Activated CD8-positive, alpha-beta T cell treated with anti-CD3 and anti-CD28 coated beads, Interleukin-2, amount 10 ng/mL, durations not matched to agents 7 days and 5 days (primary cell): ENCODE measurements at regions of chr14 and their contacts with region 1.

Region 1: GRCh38 chr14:92563359-92563758 is 49.8 kb downstream of the RIN3 start:
- DNase-seq: peak; percentile 61
- ATAC-seq: peak; percentile 81
- H3K4me3 Mint-ChIP-seq: no peak overlapping the region
- H3K27ac Mint-ChIP-seq: peak overlapping the region; percentile 69
- H3K4me1 Mint-ChIP-seq: peaks cover 78% of the 10 kb centered on the region
- H3K27me3 Mint-ChIP-seq: no peaks in the 10 kb centered on the region

Region 2: DNA sequence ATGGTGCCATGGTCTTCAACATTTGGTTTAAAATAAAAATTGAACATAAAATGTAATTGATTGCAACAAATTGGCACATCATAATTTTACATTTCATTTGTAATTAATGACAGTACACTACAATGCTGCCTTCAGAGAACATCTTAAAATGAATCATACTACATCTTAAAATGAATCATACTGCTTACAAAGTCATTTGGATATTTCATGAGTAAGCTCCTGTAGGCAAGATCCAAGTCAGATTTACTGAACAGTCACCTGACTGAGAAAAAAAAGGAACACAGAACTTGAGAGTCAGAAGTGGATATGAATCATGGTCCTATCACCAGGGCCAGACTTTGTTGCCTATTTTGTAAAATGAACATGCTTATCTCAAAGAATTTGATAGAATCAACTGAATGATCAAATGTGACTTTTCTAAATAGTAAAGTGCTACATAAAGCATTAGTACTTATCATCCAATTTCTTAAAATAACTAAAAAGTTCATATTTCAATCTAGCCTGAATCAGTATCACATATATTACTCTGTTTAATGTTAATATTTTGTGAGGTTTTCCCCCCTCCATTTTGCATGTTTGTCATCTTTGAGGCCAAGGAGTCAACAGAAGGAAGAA is 583.1 kb before region 1 on chr14:
- CTCF ChIA-PET with region 1: no interaction called
- POLR2A ChIA-PET with region 1: no interaction called
- DNase-seq: no peak
- ATAC-seq: peak; percentile 49
- H3K4me3 Mint-ChIP-seq: no peak overlapping the region
- H3K27ac Mint-ChIP-seq: no peak overlapping the region
- H3K4me1 Mint-ChIP-seq: no peaks in the 10 kb centered on the region
- H3K27me3 Mint-ChIP-seq: no peaks in the 10 kb centered on the region

Region 3: GRCh38 chr14:92577321-92577742 is 14.0 kb after region 1 on chr14:
- CTCF ChIA-PET with region 1: interaction called, 14 read pairs
- POLR2A ChIA-PET with region 1: interaction called, 19 read pairs
- DNase-seq: peak; percentile 72
- ATAC-seq: peak; percentile 80
- H3K4me3 Mint-ChIP-seq: peak overlapping the region; percentile 70
- H3K27ac Mint-ChIP-seq: peak overlapping the region; percentile 95
- H3K4me1 Mint-ChIP-seq: peaks cover 84% of the 10 kb centered on the region
- H3K27me3 Mint-ChIP-seq: no peaks in the 10 kb centered on the region

Region 4: DNA sequence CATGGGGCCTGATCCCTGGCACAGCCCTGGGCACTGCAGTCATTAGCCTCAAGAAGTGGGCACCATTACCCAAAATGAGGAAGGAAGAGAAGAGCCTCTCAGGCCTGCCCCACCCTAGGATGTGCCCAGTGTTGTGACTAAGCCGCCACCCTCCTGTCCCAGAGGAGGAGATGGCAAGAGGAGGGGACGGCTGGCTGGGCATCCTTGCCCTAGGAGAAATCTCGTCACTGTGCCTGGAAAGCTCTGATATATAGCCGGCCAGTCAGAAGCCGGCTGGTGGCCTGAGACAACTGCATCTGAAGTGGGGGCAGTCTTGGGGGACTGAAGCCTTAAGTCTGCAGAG is 69.9 kb after region 1 on chr14:
- CTCF ChIA-PET with region 1: no interaction called
- POLR2A ChIA-PET with region 1: no interaction called
- DNase-seq: no peak
- ATAC-seq: no peak
- H3K4me3 Mint-ChIP-seq: no peak overlapping the region
- H3K27ac Mint-ChIP-seq: peak overlapping the region; percentile 48
- H3K4me1 Mint-ChIP-seq: peaks cover 14% of the 10 kb centered on the region
- H3K27me3 Mint-ChIP-seq: no peaks in the 10 kb centered on the region